IMR-90 (cell line): ENCODE measurements at regions of chr2 and their contacts with region 1.

Region 1: DNA sequence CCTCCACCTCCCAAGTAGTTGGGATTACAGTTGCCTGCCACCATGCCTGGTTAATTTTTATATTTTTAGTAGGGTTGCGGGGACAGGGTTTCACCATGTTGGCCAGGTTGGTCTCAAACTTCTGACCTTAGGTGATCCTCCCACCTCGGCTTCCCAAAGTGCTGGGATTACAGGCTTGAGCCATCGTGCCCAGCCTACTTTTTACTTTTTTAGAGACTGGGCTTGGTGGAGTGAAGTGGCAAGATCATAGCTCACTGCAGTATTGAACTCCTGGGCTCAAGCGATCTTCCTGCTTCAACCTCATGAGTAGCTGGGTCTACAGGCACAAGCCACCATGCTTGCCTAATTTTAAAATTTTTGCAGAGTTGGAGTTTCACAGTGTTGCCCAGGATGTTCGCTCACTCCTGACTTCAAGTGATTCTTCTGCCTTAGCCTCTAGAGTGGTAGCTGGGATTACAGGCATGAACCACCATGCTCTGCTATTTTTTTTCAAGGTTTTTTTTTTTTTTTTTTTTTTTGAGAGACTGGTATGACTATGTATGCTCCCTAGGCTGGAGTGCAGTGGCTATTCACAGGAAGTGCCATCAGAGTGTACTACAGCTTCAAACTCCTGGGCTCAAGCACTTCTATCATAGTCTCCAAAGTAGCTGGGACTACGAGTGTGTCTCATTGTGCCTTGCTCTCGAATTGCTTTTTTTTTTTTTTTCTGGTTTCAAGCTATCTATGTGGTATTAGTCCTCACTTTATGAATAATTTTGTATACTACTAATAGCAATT is 11.9 kb downstream of the MSH2 start:
- DNase-seq: no peak
- ATAC-seq: no peak
- H3K4me3 ChIP-seq: no peak overlapping the region
- H3K27ac ChIP-seq: no peak overlapping the region
- H3K4me1 ChIP-seq: no peaks in the 10 kb centered on the region
- H3K27me3 ChIP-seq: no peaks in the 10 kb centered on the region
- CTCF ChIP-seq: no peak
- POLR2A ChIP-seq: no peak
- RAD21 ChIP-seq: no peak

Region 2: DNA sequence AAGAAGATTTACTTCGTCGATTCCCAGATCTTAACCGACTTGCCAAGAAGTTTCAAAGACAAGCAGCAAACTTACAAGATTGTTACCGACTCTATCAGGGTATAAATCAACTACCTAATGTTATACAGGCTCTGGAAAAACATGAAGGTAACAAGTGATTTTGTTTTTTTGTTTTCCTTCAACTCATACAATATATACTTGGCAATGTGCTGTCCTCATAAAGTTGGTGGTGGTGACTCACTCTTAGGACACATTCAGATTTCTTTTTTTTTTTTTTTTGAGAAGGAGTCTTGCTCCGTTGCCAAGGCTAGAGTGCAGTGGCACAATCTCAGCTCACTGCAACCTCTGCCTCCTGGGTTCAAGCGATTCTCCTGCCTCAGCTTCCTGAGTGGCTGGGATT is 14.9 kb after region 1 on chr2:
- CTCF ChIA-PET with region 1: no interaction called
- POLR2A ChIA-PET with region 1: interaction called, 10 read pairs
- dilution Hi-C with region 1: no loop called
- in situ Hi-C with region 1: no loop called
- intact Hi-C with region 1: no loop called
- DNase-seq: peak; percentile 62
- ATAC-seq: peak; percentile 40; the same call in 1 of the 2 replicates
- H3K4me3 ChIP-seq: no peak overlapping the region
- H3K27ac ChIP-seq: no peak overlapping the region
- H3K4me1 ChIP-seq: no peaks in the 10 kb centered on the region
- H3K27me3 ChIP-seq: no peaks in the 10 kb centered on the region
- CTCF ChIP-seq: no peak
- POLR2A ChIP-seq: no peak
- RAD21 ChIP-seq: no peak